ENCODE measurements at regions of chr2 and their contacts with region 1.

Region 1: GRCh38 chr2:232600053-232600773 is 33.2 kb upstream of the EFHD1 start:
- DNase-seq: no peak
- H3K4me3 ChIP-seq: no peak overlapping the region
- H3K27ac ChIP-seq: no peak overlapping the region
- H3K4me1 ChIP-seq: no peaks in the 10 kb centered on the region
- H3K27me3 ChIP-seq: no peaks in the 10 kb centered on the region
- CTCF ChIP-seq: no peak
- POLR2A ChIP-seq: no peak

Region 2: DNA sequence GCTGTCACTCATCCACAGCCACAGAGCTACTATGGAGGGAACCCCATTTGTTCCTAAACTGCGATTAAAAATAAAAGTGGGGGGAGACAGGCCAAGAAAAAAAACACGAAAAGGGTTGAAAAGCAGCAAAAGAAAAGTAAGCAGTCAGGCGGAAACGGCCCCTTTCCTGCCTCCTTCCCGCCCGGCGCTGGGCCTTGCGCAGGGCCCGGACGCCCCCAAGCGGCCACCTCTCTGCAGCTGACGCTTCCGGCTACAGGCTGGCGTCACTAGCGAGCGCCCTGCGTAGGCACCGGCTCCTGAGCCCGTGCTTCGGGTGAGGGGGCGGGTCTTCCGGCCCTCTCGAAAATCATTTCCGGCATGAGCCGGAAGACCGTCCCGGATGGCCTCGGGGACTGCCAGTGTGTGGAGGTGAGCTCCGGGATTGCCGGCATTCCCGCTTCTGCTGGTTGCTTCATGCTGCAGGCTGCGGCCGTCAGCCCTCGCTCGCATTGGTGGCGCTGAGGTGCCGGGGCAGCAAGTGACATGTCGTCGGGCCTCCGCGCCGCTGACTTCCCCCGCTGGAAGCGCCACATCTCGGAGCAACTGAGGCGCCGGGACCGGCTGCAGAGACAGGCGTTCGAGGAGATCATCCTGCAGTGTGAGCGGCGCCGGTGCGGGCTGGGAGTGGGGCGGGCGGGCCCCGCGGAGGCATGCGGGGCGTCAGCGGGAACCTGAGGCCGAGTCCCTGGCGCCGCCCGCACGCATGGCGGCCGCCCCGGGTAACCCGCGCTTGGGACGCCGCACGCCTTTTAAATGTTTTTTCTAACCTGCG is 651.3 kb after region 1 on chr2 and contains the start of gene ATG16L1:
- intact Hi-C with region 1: loop called (anchors 10 kb)
- DNase-seq: peak; percentile 94 to 96
- H3K4me3 ChIP-seq: peak within 1 kb of the TSS; percentile 87 to 98
- H3K27ac ChIP-seq: peak within 1 kb of the TSS; percentile 82 to 90
- H3K4me1 ChIP-seq: peaks cover 4 to 6% of the 10 kb centered on the region in 2 donors
- H3K27me3 ChIP-seq: no peaks in the 10 kb centered on the region
- CTCF ChIP-seq: peak; percentile 93 to 99 (median 96)
- POLR2A ChIP-seq: peak in 1 of 2 donors; percentile 73
- total RNA-seq, gene ATG16L1: 26.2 to 42.9 (median 31.9) TPM

Region 3: GRCh38 chr2:233353769-233354499 is 753.7 kb after region 1 on chr2 and contains the start of gene DGKD:
- intact Hi-C with region 1: loop called (anchors 10 kb)
- DNase-seq: peak; percentile 38 to 65
- H3K4me3 ChIP-seq: peak within 1 kb of the TSS; percentile 31 to 69
- H3K27ac ChIP-seq: peak within 1 kb of the TSS; percentile 45 to 58
- H3K4me1 ChIP-seq: peaks cover 6 to 7% of the 10 kb centered on the region in 2 donors
- H3K27me3 ChIP-seq: no peaks in the 10 kb centered on the region
- CTCF ChIP-seq: peak in 2 of 4 experiments; percentile 34 to 78
- POLR2A ChIP-seq: no peak
- total RNA-seq, gene DGKD: 5.0 to 46.1 (median 28.0) TPM

Measured in uterus (tissue), 4 donors.